Panc1 (cell line): ENCODE measurements at regions of chr4 and their contacts with region 1.

Region 1: DNA sequence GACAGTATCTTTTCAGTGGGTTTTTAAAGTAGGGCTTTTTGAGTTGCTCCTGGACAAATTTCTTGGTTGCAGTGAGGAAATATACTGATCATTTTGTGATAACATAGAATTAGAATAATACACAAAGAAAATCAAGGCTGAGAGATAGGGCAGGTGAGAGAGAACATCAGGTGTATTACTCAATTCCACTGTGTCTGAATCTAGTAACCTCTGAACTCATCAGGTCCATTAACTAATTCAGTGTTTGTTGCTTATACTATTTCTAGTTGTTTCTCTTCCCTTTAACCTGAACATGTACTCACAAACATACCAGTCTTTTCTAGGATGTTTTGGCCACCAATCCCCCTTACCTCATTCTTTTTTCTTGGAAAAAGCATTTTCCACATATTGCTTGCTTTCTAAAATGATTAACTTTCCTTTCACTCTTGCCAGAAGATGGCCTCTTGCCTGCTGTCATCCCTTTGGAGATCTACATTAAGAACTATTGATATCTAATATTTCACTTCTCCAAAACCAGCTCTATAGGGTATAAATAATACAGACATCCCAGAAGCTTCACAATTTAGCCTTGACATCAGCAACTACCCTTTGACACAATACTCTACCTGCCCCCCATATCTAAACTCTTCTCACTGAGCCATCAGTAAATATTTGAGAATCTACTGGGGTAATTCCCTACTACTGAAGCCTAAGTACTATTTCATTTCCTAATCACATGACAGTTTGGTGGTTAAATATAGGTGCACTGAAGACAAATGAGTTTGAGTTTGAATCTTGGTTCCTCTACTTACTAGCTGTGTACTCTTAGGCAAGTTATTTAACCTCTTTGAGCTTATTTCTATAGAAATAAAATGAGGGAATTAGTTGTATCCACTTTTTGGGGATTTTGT is 470.8 kb upstream of the IGFBP7 start:
- DNase-seq: no peak
- ATAC-seq: no peak
- H3K4me3 ChIP-seq: no peak overlapping the region
- H3K27ac ChIP-seq: no peak overlapping the region
- H3K4me1 ChIP-seq: no peaks in the 10 kb centered on the region
- H3K27me3 ChIP-seq: no peaks in the 10 kb centered on the region
- CTCF ChIP-seq: no peak

Region 2: DNA sequence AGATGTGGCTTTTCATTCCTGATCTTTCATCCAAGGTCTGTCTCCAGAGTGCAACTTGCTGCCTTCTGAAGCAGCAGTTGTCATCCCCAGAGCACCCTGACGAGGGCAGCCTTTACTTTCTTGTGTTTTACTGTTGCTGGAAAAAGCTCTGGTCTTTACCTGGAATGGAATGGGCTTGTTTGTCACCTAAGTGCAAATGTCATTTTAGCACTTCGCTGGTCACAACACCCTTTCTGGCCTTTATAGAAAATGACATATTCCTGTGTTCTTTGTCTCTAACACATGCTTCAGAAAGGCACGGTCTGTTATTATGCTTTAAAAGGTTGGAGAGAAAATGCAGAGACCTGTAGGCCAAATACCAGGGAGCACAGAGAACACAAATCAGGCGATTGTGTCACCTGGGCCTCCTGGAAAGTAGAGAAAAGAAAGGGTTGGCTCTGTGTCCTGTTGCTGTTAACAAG is 138.1 kb before region 1 on chr4:
- CTCF ChIA-PET with region 1: interaction called, 14 read pairs
- POLR2A ChIA-PET with region 1: no interaction called
- in situ Hi-C with region 1: no loop called
- intact Hi-C with region 1: no loop called
- DNase-seq: peak; percentile 39
- ATAC-seq: no peak
- H3K4me3 ChIP-seq: no peak overlapping the region
- H3K27ac ChIP-seq: no peak overlapping the region
- H3K4me1 ChIP-seq: no peaks in the 10 kb centered on the region
- H3K27me3 ChIP-seq: no peaks in the 10 kb centered on the region; the same call in 1 of the 2 replicates
- CTCF ChIP-seq: peak; percentile 79